Tibial artery (tissue), 4 donors: ENCODE measurements at regions of chr6 and their contacts with region 1.

Region 1: GRCh38 chr6:43334466-43335095 is 26.0 kb upstream of the CRIP3 start:
- DNase-seq: no peak
- H3K4me3 ChIP-seq: no peak overlapping the region
- H3K27ac ChIP-seq: no peak overlapping the region
- H3K4me1 ChIP-seq: no peaks in the 10 kb centered on the region
- H3K27me3 ChIP-seq: no peaks in the 10 kb centered on the region
- CTCF ChIP-seq: peak; percentile 37 to 52

Region 2: GRCh38 chr6:43263314-43264178 is 71.0 kb before region 1 on chr6:
- intact Hi-C with region 1: loop called (anchors 2 kb)
- DNase-seq: peak in 1 of 2 donors; percentile 60
- H3K4me3 ChIP-seq: no peak overlapping the region
- H3K27ac ChIP-seq: no peak overlapping the region
- H3K4me1 ChIP-seq: peaks cover 0 to 10% (median 9%) of the 10 kb centered on the region in 4 donors
- H3K27me3 ChIP-seq: peaks cover 0 to 8% of the 10 kb centered on the region in 2 donors
- CTCF ChIP-seq: peak; percentile 56 to 67